Breast epithelium (tissue), 4 donors: ENCODE measurements at regions of chr22 and their contacts with region 1.

Region 1: DNA sequence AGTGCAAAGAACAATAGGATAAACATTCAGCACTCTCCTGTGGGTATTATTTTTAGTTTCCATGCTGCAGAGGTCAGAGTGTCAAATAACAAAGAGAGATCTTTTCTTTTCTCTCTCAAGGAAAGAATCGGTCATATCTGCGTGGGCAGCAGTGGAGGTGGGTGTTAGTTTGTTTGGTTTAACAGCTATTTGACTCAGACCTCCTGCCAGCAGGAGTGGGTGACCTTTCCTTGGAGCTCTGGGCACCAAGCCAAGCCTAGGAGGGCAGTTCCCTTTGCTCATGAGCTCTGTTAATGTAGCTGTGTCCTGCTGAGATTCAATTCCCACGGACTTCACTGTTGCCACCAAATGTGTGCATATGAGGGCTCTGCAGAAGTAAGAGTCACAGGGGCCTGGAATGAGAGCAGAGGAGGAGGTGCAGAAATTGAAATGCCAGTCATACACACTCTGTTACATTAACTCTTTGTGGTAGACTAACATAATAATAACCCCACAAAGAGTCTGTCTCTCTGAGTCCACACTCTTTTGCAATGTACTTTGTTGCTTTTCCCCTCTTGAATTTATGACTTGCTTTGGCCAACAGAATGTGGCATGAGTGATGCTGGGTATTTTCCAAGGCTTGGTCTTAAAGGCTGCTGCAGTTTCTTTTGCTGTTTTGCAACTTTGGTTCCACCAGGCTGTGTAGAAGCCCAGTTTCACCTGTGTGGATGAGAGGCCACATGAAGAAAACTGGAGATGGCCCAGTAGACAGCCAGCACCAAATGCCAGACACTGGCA is 76.0 kb upstream of the GRK3 start:
- DNase-seq: peak in 1 of 2 donors; percentile 68
- H3K4me3 ChIP-seq: no peak overlapping the region
- H3K27ac ChIP-seq: no peak overlapping the region
- H3K4me1 ChIP-seq: no peaks in the 10 kb centered on the region
- H3K27me3 ChIP-seq: no peaks in the 10 kb centered on the region
- CTCF ChIP-seq: no peak
- POLR2A ChIP-seq: no peak

Region 2: DNA sequence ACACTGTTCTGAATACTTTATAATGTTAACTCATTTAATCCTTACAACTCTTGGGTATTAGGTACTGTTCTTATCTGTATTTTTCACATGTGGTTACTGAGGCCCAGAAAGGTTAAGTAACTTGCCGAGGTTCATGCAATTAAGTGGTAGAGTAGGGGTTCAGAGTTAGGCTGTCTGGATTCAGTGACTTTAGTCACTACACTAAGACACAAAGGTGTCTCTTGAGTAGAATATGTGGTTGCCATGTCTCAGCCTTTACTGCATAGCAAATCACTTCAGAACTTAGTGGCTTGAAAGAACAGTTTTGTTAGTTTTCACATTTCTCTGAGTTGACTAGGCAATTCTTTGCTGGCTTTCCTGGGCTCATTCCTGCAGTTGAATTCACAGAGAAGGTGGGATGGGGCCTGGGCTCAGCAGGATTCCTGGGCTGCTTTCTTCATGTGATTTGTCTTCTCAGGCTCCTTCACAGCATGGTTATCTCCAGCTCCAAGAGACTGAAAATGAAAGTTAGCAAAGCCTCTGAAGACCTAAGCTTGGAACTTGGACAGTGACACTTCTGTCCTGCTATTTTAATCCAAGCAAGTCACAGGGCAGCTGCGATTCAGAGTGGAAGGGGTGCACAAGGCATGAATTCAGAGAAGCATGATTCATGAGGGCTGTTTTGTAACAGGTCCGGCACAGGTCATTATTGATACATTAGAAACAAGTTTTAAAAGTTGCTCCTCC is 1149.5 kb before region 1 on chr22:
- intact Hi-C with region 1: loop called (anchors 10 kb)
- DNase-seq: no peak
- H3K4me3 ChIP-seq: no peak overlapping the region
- H3K27ac ChIP-seq: no peak overlapping the region
- H3K4me1 ChIP-seq: no peaks in the 10 kb centered on the region
- H3K27me3 ChIP-seq: no peaks in the 10 kb centered on the region
- CTCF ChIP-seq: no peak
- POLR2A ChIP-seq: no peak

Region 3: DNA sequence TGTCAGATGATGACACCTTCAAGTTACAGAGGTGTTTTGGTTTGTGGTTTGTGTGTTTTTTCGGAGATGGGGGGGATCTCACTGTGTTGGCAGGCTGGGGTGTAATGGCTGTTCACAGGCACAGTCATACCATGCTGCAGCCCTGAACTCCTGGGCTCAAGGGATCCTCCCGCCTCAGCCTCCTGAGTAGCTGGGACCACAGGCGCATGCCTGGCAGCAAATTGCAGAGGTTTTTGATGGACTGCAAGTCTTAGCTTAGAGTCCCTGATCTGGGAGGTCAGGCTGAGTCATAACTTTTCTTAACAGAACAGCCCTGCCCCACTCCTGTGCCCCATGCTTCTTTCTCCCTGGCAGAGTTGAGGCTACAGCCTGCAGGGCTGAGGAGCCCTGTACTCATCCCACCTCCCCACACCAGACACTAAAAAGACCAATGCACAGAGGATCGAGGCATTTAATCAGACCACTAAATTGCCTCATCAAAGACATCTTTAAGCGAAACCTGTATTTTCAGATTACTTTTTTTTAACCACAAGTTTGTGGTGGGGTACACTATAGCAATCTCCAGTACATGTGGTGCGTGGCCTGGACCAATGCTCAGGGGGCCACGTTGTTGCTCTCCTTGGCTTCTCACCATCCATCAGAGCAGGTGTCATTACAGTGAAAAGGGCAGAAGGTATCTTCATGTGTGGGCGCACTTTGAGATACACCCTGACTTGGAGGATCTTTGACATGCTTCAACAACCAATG is 1078.1 kb before region 1 on chr22:
- intact Hi-C with region 1: no loop called
- DNase-seq: no peak
- H3K4me3 ChIP-seq: no peak overlapping the region
- H3K27ac ChIP-seq: no peak overlapping the region
- H3K4me1 ChIP-seq: peaks cover 7% of the 10 kb centered on the region in 2 donors
- H3K27me3 ChIP-seq: no peaks in the 10 kb centered on the region
- CTCF ChIP-seq: no peak
- POLR2A ChIP-seq: no peak

Region 4: DNA sequence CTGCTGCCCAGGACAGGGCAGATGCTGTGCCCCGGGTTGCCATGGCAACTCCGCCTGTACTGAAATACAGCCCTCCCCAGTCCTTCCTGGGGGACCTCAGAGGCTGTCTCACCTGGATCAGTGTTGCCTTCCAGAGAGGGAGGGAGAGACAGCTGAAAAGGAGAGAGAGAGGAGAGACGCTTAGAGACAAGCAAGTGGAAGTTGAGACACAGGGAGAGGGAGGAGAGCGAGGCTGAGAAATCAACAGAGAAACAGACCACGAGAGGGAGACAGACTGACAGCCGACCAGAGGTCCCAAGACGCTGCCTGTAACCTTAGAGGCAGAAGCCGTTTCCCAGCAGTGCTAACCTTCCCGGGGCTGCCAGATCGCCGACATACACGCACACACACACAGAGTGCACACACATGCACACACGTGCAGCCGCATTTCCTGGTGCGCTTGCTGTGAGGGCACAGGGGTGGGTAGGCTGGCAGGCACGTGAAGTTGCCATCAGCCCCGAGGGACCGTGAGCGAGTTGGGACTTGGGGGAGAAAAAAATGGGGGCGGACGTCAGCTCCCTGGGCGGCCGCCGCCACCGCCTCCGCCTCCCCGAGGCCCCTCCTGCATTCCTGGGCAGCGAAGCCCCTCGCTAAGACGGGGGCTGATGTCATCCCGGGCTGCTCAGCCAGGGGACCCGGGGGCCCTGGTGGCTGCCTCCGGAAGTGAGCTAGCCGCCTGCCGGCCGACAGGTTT is 377.4 kb before region 1 on chr22:
- intact Hi-C with region 1: no loop called
- DNase-seq: peak; percentile 83 to 85
- H3K4me3 ChIP-seq: peak overlapping the region; percentile 40 to 71 (median 68)
- H3K27ac ChIP-seq: peak overlapping the region; percentile 94 to 95
- H3K4me1 ChIP-seq: peaks cover 0 to 11% of the 10 kb centered on the region in 2 donors
- H3K27me3 ChIP-seq: no peaks in the 10 kb centered on the region
- CTCF ChIP-seq: peak; percentile 51 to 74 (median 71)
- POLR2A ChIP-seq: no peak

Region 5: DNA sequence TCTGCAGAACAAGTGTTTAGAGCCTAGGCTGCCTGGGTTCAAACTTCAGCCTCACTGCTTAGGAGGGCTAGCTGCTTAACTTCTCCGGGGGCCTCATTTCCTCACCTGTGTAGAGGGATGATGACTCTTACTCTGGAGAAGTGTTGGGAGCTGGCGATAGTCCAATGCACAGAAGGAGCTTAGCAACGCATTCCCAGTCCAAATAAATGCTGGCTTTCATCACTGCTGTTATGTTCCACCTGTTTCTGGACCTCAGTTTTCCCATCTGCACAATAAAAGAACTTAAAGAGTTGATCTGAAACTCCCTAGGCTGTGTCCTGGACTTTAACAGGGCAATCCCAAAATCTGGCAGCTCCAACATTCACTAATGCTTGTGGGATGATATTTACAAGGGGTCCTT is 1506.8 kb after region 1 on chr22:
- intact Hi-C with region 1: no loop called
- DNase-seq: no peak
- H3K4me3 ChIP-seq: no peak overlapping the region
- H3K27ac ChIP-seq: no peak overlapping the region
- H3K4me1 ChIP-seq: no peaks in the 10 kb centered on the region
- H3K27me3 ChIP-seq: no peaks in the 10 kb centered on the region
- CTCF ChIP-seq: no peak
- POLR2A ChIP-seq: no peak